Pancreas (tissue), 10 donors: ENCODE measurements at regions of chr15 and their contacts with region 1.

Region 1: GRCh38 chr15:68559345-68560310 is 19.2 kb upstream of the CORO2B start:
- DNase-seq: peak; percentile 44 to 94 (median 74)
- ATAC-seq: peak; percentile 91 to 99 (median 98)
- H3K4me3 ChIP-seq: peak overlapping the region in 2 of 4 donors; percentile 16 to 41
- H3K27ac ChIP-seq: no peak overlapping the region
- H3K4me1 ChIP-seq: peaks cover 0 to 2% (median 0%) of the 10 kb centered on the region in 3 donors
- H3K27me3 ChIP-seq: peaks cover 0 to 7% (median 0%) of the 10 kb centered on the region in 4 donors
- CTCF ChIP-seq: peak; percentile 90 to 94 (median 92)

Region 2: DNA sequence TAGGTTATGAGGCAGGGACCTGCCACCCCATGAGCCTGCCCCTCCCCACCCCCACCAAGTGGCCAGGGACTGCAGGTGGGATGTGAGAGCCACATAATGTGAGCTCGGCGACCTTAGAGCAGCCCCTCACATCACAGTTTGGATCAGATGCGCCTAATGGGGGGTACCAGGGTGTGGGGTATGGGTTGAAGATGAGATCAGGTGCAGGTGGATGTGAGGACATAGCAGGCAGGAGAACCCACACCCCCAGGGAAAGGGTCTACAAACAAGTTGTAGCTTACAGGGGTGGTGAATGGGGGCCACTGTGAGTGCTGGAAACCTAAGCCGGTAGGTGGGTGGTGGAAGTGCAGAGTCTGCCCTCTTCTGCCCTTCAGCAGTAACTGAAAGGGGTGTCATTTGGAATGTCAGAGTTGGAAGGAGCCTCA is 113.2 kb after region 1 on chr15:
- intact Hi-C with region 1: loop called in 2 of 3 experiments (anchors 5 kb)
- DNase-seq: no peak
- ATAC-seq: peak in 1 of 4 donors; percentile 29
- H3K4me3 ChIP-seq: no peak overlapping the region
- H3K27ac ChIP-seq: no peak overlapping the region
- H3K4me1 ChIP-seq: no peaks in the 10 kb centered on the region
- H3K27me3 ChIP-seq: no peaks in the 10 kb centered on the region
- CTCF ChIP-seq: no peak

Region 3: DNA sequence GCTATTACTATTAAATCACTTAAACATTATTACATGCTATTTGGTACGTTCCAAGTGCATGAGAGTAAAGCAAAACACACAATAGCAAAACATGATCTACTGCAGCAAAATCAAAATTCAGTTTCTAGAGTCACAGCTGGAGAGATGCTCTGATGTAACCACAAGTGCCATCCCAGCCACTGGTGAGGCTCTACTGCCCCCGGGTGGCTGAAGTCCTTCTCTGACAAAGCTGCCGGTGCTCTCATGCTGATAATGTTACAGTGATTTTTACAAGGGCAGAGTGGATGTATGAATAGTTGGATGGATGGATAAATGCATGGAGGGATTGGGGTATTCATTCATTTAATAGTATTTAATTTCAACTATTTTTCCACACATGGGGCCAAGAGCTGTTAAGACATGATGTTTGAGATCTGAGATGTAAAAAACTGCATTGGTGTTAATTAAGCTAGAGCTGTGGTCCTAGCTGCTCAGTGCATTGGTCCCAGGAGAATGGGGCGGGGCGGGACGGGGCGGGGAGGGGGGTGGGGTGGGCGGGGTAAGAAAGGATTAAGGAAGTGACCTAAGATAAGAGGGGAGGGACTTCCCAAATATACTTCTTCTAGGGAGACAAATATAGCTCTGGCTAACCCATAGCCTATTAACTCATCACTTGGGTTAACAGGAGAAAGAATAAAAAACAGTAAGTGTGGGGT is 365.4 kb after region 1 on chr15:
- intact Hi-C with region 1: loop called in 1 of 3 experiments (anchors 10 kb)
- DNase-seq: peak; percentile 58 to 85 (median 76)
- ATAC-seq: peak; percentile 67 to 98 (median 96)
- H3K4me3 ChIP-seq: no peak overlapping the region
- H3K27ac ChIP-seq: no peak overlapping the region
- H3K4me1 ChIP-seq: no peaks in the 10 kb centered on the region
- H3K27me3 ChIP-seq: no peaks in the 10 kb centered on the region
- CTCF ChIP-seq: peak; percentile 57 to 76 (median 70)